ENCODE measurements at regions of chr7 and their contacts with region 1.

Region 1: DNA sequence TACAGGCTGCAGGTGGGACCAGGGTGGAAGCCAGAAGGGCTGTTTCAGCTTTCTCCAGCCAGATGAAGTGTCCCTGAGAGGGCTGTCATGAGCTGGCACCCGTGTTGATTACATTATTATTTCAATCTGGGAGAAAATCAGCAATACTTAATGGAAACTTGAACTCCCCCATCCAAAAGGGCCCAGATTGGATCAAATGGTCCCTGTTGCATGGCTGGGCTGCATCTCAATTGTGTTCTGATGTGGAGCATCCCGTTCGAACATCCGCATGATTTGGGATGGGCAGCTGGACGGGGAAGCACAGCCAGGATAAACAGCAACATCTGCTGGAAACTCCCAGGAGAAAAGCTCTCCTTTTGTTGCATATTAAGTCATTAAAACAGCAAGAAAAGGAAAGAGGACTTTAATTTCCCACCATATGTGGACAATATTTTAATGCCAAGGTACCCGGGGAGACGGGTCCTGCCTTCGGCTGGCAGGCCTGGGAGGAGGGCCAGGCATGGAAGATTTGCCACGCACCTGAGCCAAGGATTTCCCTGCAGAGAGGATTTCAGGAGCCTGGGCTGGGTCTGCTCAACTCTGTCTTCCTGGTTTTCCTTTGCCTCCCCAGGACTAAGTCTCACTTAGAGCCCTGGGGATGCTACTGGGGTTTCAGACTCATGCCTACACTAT is 52.4 kb downstream of the NPTX2 start:
- DNase-seq: no peak
- H3K4me3 ChIP-seq: no peak overlapping the region
- H3K27ac ChIP-seq: no peak overlapping the region
- H3K4me1 ChIP-seq: no peaks in the 10 kb centered on the region
- H3K27me3 ChIP-seq: peaks cover 0 to 16% of the 10 kb centered on the region in 2 donors
- CTCF ChIP-seq: no peak
- POLR2A ChIP-seq: no peak

Region 2: DNA sequence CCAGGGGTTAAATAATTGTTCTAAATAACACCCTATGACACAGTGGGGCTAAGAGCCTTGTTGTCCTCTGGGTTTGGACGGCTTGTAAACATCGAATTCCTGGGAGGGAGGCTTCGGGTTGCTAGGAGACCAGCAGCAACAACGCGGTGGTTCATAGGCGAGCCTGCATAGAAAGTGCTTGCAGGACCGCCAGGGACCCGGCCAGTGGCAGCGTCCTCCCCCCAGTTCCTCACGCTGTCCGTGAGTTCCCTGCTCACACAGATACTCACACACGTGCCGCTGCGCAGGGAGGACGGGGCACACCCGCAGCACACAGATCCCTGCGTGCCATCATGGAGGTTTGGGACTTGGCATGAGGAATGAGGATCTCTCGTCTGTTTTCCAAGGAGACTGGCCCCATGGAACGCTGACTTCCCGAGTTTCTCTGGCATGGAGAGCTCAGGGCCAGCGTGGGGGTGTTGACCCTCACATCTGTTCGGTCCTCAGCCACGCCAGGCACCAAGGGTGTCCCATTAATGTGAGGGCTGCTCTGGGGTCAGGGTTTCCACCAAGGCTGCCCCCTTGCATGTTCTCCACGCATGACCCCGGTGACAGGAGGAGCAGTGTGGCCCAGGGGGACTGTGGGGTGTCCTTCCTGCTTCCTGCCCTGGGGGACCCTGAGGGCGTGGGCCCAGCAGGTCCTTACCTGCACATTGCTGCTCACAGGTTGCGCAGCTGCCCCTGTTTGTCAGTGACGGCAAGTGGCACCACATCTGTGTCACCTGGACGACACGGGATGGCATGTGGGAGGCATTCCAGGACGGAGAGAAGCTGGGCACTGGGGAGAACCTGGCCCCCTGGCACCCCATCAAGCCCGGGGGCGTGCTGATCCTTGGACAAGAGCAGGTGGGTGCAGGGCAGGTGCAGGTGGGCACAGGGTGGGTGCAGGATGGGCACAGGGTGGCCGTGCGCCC is 42.7 kb before region 1 on chr7:
- intact Hi-C with region 1: loop called (anchors 1 kb)
- DNase-seq: no peak
- H3K4me3 ChIP-seq: no peak overlapping the region
- H3K27ac ChIP-seq: no peak overlapping the region
- H3K4me1 ChIP-seq: no peaks in the 10 kb centered on the region
- H3K27me3 ChIP-seq: peaks cover 0 to 57% of the 10 kb centered on the region in 2 donors
- CTCF ChIP-seq: no peak
- POLR2A ChIP-seq: no peak

Region 3: DNA sequence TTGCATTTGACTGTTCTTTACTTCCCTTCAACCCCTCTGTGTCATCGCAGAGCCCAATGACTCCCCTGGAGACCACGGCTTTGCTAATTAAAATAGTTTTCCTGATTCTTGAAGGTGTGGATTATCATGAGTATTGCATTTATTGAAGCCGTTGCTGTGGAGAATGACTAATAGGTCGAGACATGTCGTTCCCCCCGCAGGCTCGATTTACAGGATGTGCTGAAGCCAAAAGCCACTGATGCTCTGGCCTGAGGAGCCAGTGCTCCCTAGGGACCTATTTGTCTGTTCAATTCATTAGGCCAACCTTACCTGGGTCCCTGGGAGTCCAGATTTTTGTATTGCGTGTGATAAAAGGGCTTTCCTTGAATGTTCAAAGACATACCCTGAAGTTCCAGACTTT is 49.9 kb after region 1 on chr7:
- intact Hi-C with region 1: no loop called
- DNase-seq: no peak
- H3K4me3 ChIP-seq: no peak overlapping the region
- H3K27ac ChIP-seq: no peak overlapping the region
- H3K4me1 ChIP-seq: no peaks in the 10 kb centered on the region
- H3K27me3 ChIP-seq: peaks cover 0 to 6% of the 10 kb centered on the region in 2 donors
- CTCF ChIP-seq: no peak
- POLR2A ChIP-seq: no peak